Mammary epithelial cell (primary cell): ENCODE measurements at regions of chr1 and their contacts with region 1.

Region 1: GRCh38 chr1:154829062-154829461 is 41.0 kb downstream of the KCNN3 start:
- DNase-seq: no peak
- H3K4me3 ChIP-seq: no peak overlapping the region
- H3K27ac ChIP-seq: no peak overlapping the region
- H3K4me1 ChIP-seq: no peaks in the 10 kb centered on the region
- H3K27me3 ChIP-seq: no peaks in the 10 kb centered on the region
- CTCF ChIP-seq: no peak

Region 2: GRCh38 chr1:154614901-154615300 is 214.2 kb before region 1 on chr1:
- CTCF ChIA-PET with region 1: no interaction called
- dilution Hi-C with region 1: no loop called
- in situ Hi-C with region 1: no loop called
- intact Hi-C with region 1: no loop called
- DNase-seq: no peak
- H3K4me3 ChIP-seq: no peak overlapping the region
- H3K27ac ChIP-seq: no peak overlapping the region
- H3K4me1 ChIP-seq: no peaks in the 10 kb centered on the region
- H3K27me3 ChIP-seq: no peaks in the 10 kb centered on the region
- CTCF ChIP-seq: peak in 1 of 2 donors; percentile 25

Region 3: GRCh38 chr1:154747740-154748404 is 81.2 kb before region 1 on chr1:
- CTCF ChIA-PET with region 1: no interaction called
- dilution Hi-C with region 1: loop called (anchors 5 kb)
- in situ Hi-C with region 1: no loop called
- intact Hi-C with region 1: no loop called
- DNase-seq: no peak
- H3K4me3 ChIP-seq: no peak overlapping the region
- H3K27ac ChIP-seq: no peak overlapping the region
- H3K4me1 ChIP-seq: no peaks in the 10 kb centered on the region
- H3K27me3 ChIP-seq: no peaks in the 10 kb centered on the region
- CTCF ChIP-seq: no peak

Region 4: GRCh38 chr1:154775621-154776605 is 53.1 kb before region 1 on chr1:
- CTCF ChIA-PET with region 1: no interaction called
- dilution Hi-C with region 1: loop called (anchors 5 kb)
- in situ Hi-C with region 1: no loop called
- intact Hi-C with region 1: no loop called
- DNase-seq: no peak
- H3K4me3 ChIP-seq: no peak overlapping the region
- H3K27ac ChIP-seq: no peak overlapping the region
- H3K4me1 ChIP-seq: peaks cover 8% of the 10 kb centered on the region
- H3K27me3 ChIP-seq: no peaks in the 10 kb centered on the region
- CTCF ChIP-seq: no peak

Region 5: GRCh38 chr1:154891452-154891851 is 62.4 kb after region 1 on chr1:
- CTCF ChIA-PET with region 1: no interaction called
- dilution Hi-C with region 1: loop called (anchors 5 kb)
- in situ Hi-C with region 1: no loop called
- intact Hi-C with region 1: no loop called
- DNase-seq: no peak
- H3K4me3 ChIP-seq: no peak overlapping the region
- H3K27ac ChIP-seq: no peak overlapping the region
- H3K4me1 ChIP-seq: no peaks in the 10 kb centered on the region
- H3K27me3 ChIP-seq: no peaks in the 10 kb centered on the region
- CTCF ChIP-seq: no peak

Region 6: GRCh38 chr1:154908937-154909336 is 79.9 kb after region 1 on chr1:
- CTCF ChIA-PET with region 1: no interaction called
- dilution Hi-C with region 1: no loop called
- in situ Hi-C with region 1: no loop called
- intact Hi-C with region 1: no loop called
- DNase-seq: no peak
- H3K4me3 ChIP-seq: no peak overlapping the region
- H3K27ac ChIP-seq: no peak overlapping the region
- H3K4me1 ChIP-seq: no peaks in the 10 kb centered on the region
- H3K27me3 ChIP-seq: no peaks in the 10 kb centered on the region
- CTCF ChIP-seq: no peak

Region 7: GRCh38 chr1:155139895-155140631 is 311.0 kb after region 1 on chr1 and contains the start of gene DPM3:
- CTCF ChIA-PET with region 1: no interaction called
- dilution Hi-C with region 1: no loop called
- in situ Hi-C with region 1: no loop called
- intact Hi-C with region 1: no loop called
- DNase-seq: peak; percentile 76
- H3K4me3 ChIP-seq: peak within 1 kb of the TSS; percentile 88 to 98 (median 93)
- H3K27ac ChIP-seq: peak within 1 kb of the TSS; percentile 87
- H3K4me1 ChIP-seq: peaks cover 15% of the 10 kb centered on the region
- H3K27me3 ChIP-seq: no peaks in the 10 kb centered on the region
- CTCF ChIP-seq: no peak
- total RNA-seq, gene DPM3: 27.2 to 67.9 TPM